Gastrocnemius medialis (tissue), 4 donors: ENCODE measurements at regions of chr2 and their contacts with region 1.

Region 1: DNA sequence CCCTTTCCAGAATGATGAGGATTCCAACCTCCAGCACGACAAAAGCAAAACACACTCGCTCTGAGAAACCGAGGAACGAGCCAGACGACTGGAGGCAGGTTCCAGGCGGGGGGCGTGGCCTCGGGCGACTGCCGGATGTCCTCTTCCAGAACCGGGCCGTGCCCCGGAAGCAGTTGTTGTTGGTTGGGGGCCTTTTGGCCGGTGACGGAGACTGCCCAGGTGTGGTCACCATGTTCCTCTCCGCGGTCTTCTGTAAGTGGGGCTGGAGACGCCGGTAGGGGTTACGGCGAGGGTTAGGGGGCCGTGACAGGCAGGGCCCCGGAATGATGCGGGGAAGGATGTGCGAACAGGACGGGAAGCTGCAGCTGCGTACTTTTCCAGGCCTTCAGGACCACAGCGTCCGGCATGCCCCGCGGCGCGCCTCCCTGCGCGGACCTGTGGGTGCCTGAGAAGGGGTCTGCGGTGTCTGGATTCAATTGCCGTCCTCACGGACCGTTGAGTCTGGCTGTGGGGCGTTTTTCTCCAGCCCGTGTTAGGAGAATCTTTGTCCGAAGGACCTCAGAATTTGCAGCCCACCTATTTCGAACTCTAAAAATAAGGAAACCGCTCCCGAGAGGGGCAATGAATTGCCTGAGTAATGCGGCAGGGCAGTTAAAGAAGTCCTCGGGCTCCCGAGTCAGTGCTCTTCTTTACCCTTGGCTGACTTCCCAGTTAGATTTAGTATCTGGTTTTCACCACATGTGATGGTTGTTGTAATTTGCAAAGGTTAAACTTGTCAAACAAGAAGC is at the start of gene MRPL33:
- DNase-seq: peak; percentile 92 to 94
- ATAC-seq: peak; percentile 91 to 94
- H3K4me3 ChIP-seq: peak within 1 kb of the TSS; percentile 66 to 98 (median 84)
- H3K27ac ChIP-seq: peak within 1 kb of the TSS; percentile 87 to 99 (median 92)
- H3K4me1 ChIP-seq: peaks cover 40 to 41% of the 10 kb centered on the region in 2 donors
- H3K27me3 ChIP-seq: no peaks in the 10 kb centered on the region
- CTCF ChIP-seq: peak in 2 of 5 experiments; percentile 7 to 9
- POLR2A ChIP-seq: peak; percentile 87 to 89
- total RNA-seq, gene MRPL33: 231 to 500 (median 388) TPM

Region 2: DNA sequence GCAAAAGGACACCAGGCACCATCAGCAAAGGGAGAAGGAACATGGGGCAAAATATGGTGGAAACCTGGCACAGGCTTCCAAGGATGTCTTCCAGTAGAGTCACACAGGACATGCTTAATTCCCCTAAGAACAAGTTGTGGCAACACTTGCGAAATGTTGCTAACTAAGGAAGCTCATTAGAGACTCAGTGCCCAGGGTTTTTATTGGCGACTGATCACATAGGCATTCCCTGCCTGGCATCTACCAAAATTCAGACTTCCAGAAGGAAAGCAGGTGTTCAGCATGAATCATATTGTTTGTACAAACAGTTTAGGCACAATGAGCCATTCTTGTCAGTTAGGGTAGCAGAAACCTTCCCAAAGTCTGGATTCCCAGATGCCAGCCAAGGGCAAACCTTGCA is 82.3 kb before region 1 on chr2:
- in situ Hi-C with region 1: no loop called
- intact Hi-C with region 1: no loop called
- DNase-seq: peak; percentile 42 to 76
- ATAC-seq: peak; percentile 78 to 96
- H3K4me3 ChIP-seq: no peak overlapping the region
- H3K27ac ChIP-seq: peak overlapping the region; percentile 70 to 87 (median 74)
- H3K4me1 ChIP-seq: peaks cover 3 to 11% of the 10 kb centered on the region in 2 donors
- H3K27me3 ChIP-seq: no peaks in the 10 kb centered on the region
- CTCF ChIP-seq: no peak
- POLR2A ChIP-seq: no peak

Region 3: DNA sequence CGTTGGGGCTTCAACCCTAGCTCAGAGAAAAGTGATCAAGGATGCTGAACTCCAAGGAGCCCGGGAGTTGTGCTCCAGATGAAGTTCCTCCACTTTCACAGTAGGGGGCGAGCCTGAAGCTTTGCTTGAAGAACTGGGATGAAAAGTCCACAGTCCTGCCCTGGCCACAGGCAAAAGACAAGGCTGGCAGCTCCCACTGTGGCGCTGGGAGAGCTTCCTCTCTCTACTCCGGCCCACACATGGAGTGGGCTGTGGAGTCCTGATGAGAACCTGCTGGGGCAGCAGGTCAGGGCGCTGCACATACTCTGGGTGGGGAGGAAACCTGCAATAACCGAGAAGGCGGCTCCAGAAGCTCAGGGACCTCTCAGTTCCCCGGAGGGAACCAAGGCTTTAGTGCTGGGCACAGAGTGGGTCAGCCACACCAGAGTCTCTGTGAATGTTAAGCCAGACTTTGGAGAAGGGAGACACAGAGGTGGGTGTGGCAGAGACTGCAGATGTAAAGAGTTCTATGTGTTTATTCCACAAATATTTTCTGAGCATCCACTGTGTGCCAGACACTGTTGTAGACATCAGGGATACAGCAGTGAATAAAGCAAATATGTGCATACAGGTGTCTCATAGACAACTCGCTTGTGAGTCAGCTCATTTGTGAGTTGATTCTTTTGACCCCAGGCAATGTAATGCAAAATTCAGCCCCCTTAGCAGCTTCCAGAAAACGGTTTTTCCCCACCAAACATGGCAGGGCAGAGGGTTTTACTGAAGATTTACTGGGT is 48.2 kb before region 1 on chr2:
- in situ Hi-C with region 1: no loop called
- intact Hi-C with region 1: loop called (anchors 5 kb)
- DNase-seq: peak; percentile 35 to 64
- ATAC-seq: peak; percentile 71 to 90
- H3K4me3 ChIP-seq: no peak overlapping the region
- H3K27ac ChIP-seq: peak overlapping the region; percentile 19 to 75 (median 53)
- H3K4me1 ChIP-seq: peaks cover 0 to 8% of the 10 kb centered on the region in 2 donors
- H3K27me3 ChIP-seq: no peaks in the 10 kb centered on the region
- CTCF ChIP-seq: peak; percentile 75 to 88 (median 79)
- POLR2A ChIP-seq: no peak

Region 4: DNA sequence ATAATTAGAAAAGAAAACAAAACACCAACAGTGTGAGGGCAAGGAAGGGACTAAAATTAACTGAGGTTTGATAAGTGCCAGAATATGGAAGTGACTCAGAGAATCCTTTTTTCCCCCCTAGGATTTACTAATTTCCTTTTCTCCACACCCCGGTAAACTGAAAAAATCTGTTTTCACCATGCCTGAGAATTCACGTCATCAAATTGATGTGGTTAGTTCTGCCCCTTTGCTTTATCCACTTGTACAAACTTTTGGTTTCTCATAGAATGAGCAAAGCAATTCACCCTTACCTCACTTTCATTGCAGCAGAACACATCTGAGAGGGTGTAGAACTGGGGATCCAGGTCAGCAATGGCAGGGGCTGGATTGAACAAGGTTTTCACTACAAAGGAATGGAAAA is 60.7 kb after region 1 on chr2:
- in situ Hi-C with region 1: no loop called
- intact Hi-C with region 1: no loop called
- DNase-seq: no peak
- ATAC-seq: no peak
- H3K4me3 ChIP-seq: no peak overlapping the region
- H3K27ac ChIP-seq: no peak overlapping the region
- H3K4me1 ChIP-seq: no peaks in the 10 kb centered on the region
- H3K27me3 ChIP-seq: no peaks in the 10 kb centered on the region
- CTCF ChIP-seq: no peak
- POLR2A ChIP-seq: no peak

Region 5: GRCh38 chr2:27992787-27993401 is 221.2 kb after region 1 on chr2:
- in situ Hi-C with region 1: no loop called
- intact Hi-C with region 1: no loop called
- DNase-seq: no peak
- ATAC-seq: peak in 1 of 2 donors; percentile 70
- H3K4me3 ChIP-seq: no peak overlapping the region
- H3K27ac ChIP-seq: no peak overlapping the region
- H3K4me1 ChIP-seq: peaks cover 25 to 29% of the 10 kb centered on the region in 2 donors
- H3K27me3 ChIP-seq: no peaks in the 10 kb centered on the region
- CTCF ChIP-seq: no peak
- POLR2A ChIP-seq: no peak